Lower leg skin (tissue), 4 donors: ENCODE measurements at regions of chr16 and their contacts with region 1.

Region 1: GRCh38 chr16:71423865-71424264 is 18.0 kb downstream of the TLE7 start:
- DNase-seq: no peak
- H3K4me3 ChIP-seq: no peak overlapping the region
- CTCF ChIP-seq: no peak
- POLR2A ChIP-seq: no peak

Region 2: DNA sequence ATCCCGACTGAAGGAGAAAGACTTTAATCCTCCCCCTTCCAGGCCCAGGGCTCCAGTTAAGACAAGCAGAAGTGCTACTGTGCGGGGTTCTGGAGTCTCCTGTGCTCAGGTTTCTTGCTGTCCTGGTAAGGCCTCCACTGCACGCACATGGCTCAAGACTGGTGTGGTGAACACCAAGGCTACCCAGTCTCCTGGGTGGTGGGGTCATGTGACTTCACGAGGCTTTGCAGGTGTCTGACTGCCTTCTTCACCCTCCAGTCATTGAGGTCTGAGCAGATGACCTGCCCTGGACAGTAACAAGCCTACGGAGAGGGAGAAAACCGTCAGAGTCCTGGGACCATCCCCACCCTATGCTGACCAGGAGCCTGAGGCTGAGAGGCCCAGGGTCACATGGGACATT is 19.0 kb after region 1 on chr16:
- intact Hi-C with region 1: loop called (anchors 1 kb)
- DNase-seq: no peak
- H3K4me3 ChIP-seq: no peak overlapping the region
- CTCF ChIP-seq: no peak
- POLR2A ChIP-seq: no peak